ENCODE measurements at regions of chr1 and their contacts with region 1.

Region 1: GRCh38 chr1:22976461-22977243 is 4.0 kb upstream of the LACTBL1 start:
- DNase-seq: peak; percentile 65
- H3K4me3 ChIP-seq: no peak overlapping the region
- H3K27ac ChIP-seq: no peak overlapping the region
- H3K27me3 ChIP-seq: peaks cover 12% of the 10 kb centered on the region
- CTCF ChIP-seq: peak; percentile 86

Region 2: DNA sequence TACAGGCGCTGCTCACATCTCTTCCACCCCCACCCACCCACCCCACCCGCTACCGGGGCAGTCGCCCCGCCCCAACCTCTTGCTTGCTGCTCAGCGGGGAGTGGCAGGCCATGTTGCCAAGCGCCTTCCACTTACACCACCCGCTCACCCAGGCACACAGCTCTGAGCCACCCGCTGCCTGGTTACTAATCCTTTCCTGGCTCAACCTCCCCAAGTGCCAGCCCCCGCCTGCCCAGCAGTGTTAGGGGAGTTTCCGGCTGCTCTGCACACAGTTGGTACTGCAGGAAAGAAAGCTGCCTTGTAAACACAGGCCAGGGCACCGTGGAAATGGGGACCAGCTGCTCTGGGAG is 60.2 kb before region 1 on chr1:
- CTCF ChIA-PET with region 1: no interaction called
- POLR2A ChIA-PET with region 1: no interaction called
- DNase-seq: no peak
- H3K4me3 ChIP-seq: no peak overlapping the region
- H3K27ac ChIP-seq: no peak overlapping the region
- H3K27me3 ChIP-seq: no peaks in the 10 kb centered on the region
- CTCF ChIP-seq: no peak

Region 3: GRCh38 chr1:22949822-22950331 is 26.8 kb before region 1 on chr1:
- CTCF ChIA-PET with region 1: no interaction called
- POLR2A ChIA-PET with region 1: no interaction called
- DNase-seq: no peak
- H3K4me3 ChIP-seq: no peak overlapping the region
- H3K27ac ChIP-seq: no peak overlapping the region
- H3K27me3 ChIP-seq: peaks cover 45% of the 10 kb centered on the region
- CTCF ChIP-seq: no peak

Region 4: GRCh38 chr1:22995774-22996173 is 19.1 kb after region 1 on chr1:
- CTCF ChIA-PET with region 1: no interaction called
- POLR2A ChIA-PET with region 1: no interaction called
- DNase-seq: no peak
- H3K4me3 ChIP-seq: no peak overlapping the region
- H3K27ac ChIP-seq: no peak overlapping the region
- H3K27me3 ChIP-seq: peaks cover 7% of the 10 kb centered on the region
- CTCF ChIP-seq: no peak

Region 5: DNA sequence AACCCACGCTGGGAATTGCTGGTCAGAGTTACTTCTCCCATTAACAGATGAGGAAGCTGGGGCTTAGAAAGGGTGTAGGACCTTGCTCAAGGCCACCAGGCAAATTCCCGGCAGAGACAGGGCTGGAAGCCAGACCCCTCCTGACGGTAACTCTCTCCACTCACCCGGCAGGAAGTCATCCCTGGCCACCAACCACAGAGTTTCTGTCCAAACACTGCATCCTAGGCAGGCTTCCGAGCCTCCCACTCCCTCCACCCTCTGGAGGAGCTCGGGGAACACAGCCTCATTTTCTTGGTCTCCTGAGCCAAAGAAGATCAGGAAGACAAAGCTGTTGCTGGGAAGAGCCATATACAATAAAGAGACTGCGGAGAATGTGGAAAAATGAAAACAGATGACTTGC is 418.0 kb after region 1 on chr1:
- CTCF ChIA-PET with region 1: no interaction called
- POLR2A ChIA-PET with region 1: interaction called, 10 read pairs
- DNase-seq: no peak
- H3K4me3 ChIP-seq: 0 out of 2 replicates have a peak overlapping the region, but pooled peaks have one; percentile 4
- H3K27ac ChIP-seq: peak overlapping the region; percentile 86
- H3K27me3 ChIP-seq: no peaks in the 10 kb centered on the region
- CTCF ChIP-seq: 0 out of 2 replicates have a peak, but pooled peaks have one; percentile 9